ENCODE measurements at regions of chr16 and their contacts with region 1.

Region 1: DNA sequence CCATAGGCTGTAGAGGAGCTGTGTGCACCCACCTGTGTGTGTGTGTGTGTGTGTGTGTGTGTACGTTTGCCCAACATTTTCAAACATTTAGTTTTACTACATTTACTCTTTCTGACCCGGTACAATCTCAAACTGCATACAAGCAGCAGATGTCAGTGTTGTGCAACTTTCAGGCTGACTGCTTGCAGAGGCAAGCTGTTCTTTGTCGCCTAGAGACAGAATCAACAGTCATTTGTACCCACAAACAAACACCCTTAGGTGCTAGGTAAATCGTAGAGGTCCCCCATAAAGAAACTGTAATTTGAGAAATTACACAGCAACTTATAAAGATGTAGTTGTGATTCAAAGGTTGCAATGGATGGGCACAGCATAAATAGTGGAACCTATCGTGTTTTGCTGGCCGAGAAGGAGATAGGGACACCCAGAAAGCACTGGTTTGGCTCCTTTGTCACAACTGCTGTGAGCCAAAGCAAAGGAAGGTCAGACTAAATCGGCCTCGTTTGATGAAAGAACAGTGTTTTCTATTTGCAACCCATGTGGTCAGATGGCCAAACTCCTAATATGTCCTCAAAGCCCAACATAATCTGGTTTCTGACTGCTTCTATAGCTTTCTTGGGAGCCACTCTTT is 478.4 kb downstream of the TOX3 start:
- DNase-seq: peak; percentile 64
- H3K4me3 Mint-ChIP-seq: no peak overlapping the region
- H3K27ac Mint-ChIP-seq: no peak overlapping the region
- H3K4me1 Mint-ChIP-seq: peaks cover 57% of the 10 kb centered on the region
- H3K27me3 Mint-ChIP-seq: no peaks in the 10 kb centered on the region
- CTCF ChIP-seq: no peak

Region 2: GRCh38 chr16:51831595-51832367 is 236.8 kb before region 1 on chr16:
- CTCF ChIA-PET with region 1: no interaction called
- intact Hi-C with region 1: no loop called
- DNase-seq: no peak
- H3K4me3 Mint-ChIP-seq: peak overlapping the region; percentile 19
- H3K27ac Mint-ChIP-seq: peak overlapping the region; percentile 24
- H3K4me1 Mint-ChIP-seq: peaks cover 21% of the 10 kb centered on the region
- H3K27me3 Mint-ChIP-seq: no peaks in the 10 kb centered on the region
- CTCF ChIP-seq: no peak

Region 3: DNA sequence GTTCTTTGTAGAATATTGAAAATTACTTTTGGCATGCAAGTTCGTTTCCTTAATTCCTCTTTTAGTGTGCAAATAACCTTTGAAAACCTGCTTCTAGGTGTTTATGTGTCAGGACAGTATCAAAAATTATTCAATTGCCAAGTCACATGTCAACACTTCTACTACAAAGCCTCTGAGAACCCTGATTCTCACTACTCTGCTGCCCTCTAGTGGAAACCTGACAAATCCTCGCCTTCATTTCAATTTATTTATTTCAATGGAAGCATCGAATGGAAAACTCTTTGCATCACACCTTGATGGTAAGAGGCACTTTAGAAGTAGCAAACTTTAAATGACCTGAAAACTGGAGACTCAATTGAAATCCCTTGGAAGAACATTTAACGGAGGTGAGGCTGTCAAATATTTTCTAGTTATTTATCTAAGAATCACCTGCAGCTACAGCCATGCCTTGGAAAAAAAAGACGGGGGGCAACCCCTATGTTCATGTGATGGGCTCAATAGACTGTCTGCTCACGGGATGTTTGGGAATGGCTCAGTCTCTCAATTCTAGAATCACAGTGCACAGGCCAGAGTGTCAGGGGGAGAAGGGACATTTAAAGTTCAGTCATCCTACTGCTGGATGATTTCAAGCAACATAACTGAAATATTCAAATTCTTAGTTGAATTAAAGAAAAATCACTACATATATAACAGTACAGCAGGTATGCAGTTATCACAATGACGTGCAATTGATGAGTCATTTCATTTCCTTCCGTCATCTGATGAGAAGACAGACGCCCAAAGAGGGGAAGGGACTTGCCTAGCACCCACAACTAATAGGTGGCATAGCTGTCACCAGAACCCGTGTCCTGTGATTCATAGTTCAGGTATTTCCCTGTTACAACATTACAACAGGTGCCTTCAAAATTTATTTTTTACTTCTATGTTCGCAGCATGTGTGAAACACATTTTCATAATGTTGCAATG is 85.6 kb before region 1 on chr16:
- CTCF ChIA-PET with region 1: no interaction called
- intact Hi-C with region 1: no loop called
- DNase-seq: peak; percentile 72
- H3K4me3 Mint-ChIP-seq: peak overlapping the region; percentile 14
- H3K27ac Mint-ChIP-seq: peak overlapping the region; percentile 90
- H3K4me1 Mint-ChIP-seq: peaks cover 36% of the 10 kb centered on the region
- H3K27me3 Mint-ChIP-seq: no peaks in the 10 kb centered on the region
- CTCF ChIP-seq: peak; percentile 78

Region 4: DNA sequence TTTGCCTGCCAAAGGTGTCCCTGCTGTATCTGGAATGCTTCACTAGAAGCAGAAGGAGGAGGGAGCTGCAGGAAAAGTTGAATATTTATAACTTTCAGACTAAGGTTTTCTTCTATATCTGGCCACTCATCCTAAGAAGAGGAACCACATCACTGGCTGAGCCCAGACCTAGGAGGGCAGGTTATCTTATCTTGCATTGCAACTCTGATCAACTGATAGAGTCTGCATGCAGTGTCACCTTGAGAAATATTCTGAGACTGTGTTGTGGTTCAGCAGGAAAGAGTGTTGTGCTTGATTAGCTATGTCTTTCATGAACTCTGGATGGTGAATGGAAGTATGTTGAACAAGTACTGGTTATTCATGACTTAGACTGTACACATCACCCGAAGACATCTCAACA is 18.3 kb after region 1 on chr16:
- CTCF ChIA-PET with region 1: no interaction called
- intact Hi-C with region 1: no loop called
- DNase-seq: no peak
- H3K4me3 Mint-ChIP-seq: no peak overlapping the region
- H3K27ac Mint-ChIP-seq: no peak overlapping the region
- H3K4me1 Mint-ChIP-seq: no peaks in the 10 kb centered on the region
- H3K27me3 Mint-ChIP-seq: no peaks in the 10 kb centered on the region
- CTCF ChIP-seq: no peak

Region 5: GRCh38 chr16:52149003-52149402 is 80.4 kb after region 1 on chr16:
- CTCF ChIA-PET with region 1: no interaction called
- intact Hi-C with region 1: no loop called
- DNase-seq: no peak
- H3K4me3 Mint-ChIP-seq: no peak overlapping the region
- H3K27ac Mint-ChIP-seq: no peak overlapping the region
- H3K4me1 Mint-ChIP-seq: no peaks in the 10 kb centered on the region
- H3K27me3 Mint-ChIP-seq: no peaks in the 10 kb centered on the region
- CTCF ChIP-seq: no peak

Region 6: GRCh38 chr16:52191531-52192134 is 123.1 kb after region 1 on chr16:
- CTCF ChIA-PET with region 1: interaction called, 25 read pairs
- intact Hi-C with region 1: loop called (anchors 2 kb)
- DNase-seq: peak; percentile 80
- H3K4me3 Mint-ChIP-seq: no peak overlapping the region
- H3K27ac Mint-ChIP-seq: no peak overlapping the region
- H3K4me1 Mint-ChIP-seq: peaks cover 11% of the 10 kb centered on the region
- H3K27me3 Mint-ChIP-seq: no peaks in the 10 kb centered on the region
- CTCF ChIP-seq: peak; percentile 89

Region 7: GRCh38 chr16:52408191-52408845 is 339.8 kb after region 1 on chr16:
- CTCF ChIA-PET with region 1: interaction called, 6 read pairs
- intact Hi-C with region 1: loop called (anchors 10 kb)
- DNase-seq: peak; percentile 6
- H3K4me3 Mint-ChIP-seq: no peak overlapping the region
- H3K27ac Mint-ChIP-seq: peak overlapping the region; percentile 70
- H3K4me1 Mint-ChIP-seq: peaks cover 43% of the 10 kb centered on the region
- H3K27me3 Mint-ChIP-seq: no peaks in the 10 kb centered on the region
- CTCF ChIP-seq: no peak

Region 8: GRCh38 chr16:52497067-52497816 is 428.7 kb after region 1 on chr16:
- CTCF ChIA-PET with region 1: interaction called, 4 read pairs
- intact Hi-C with region 1: loop called (anchors 5 kb)
- DNase-seq: no peak
- H3K4me3 Mint-ChIP-seq: peak overlapping the region; percentile 20
- H3K27ac Mint-ChIP-seq: peak overlapping the region; percentile 79
- H3K4me1 Mint-ChIP-seq: peaks cover 92% of the 10 kb centered on the region
- H3K27me3 Mint-ChIP-seq: no peaks in the 10 kb centered on the region
- CTCF ChIP-seq: no peak

Region 9: GRCh38 chr16:52861614-52862022 is 793.1 kb after region 1 on chr16:
- CTCF ChIA-PET with region 1: interaction called, 4 read pairs
- intact Hi-C with region 1: loop called (anchors 1 kb)
- DNase-seq: peak; percentile 61
- H3K4me3 Mint-ChIP-seq: no peak overlapping the region
- H3K27ac Mint-ChIP-seq: no peak overlapping the region
- H3K4me1 Mint-ChIP-seq: peaks cover 36% of the 10 kb centered on the region
- H3K27me3 Mint-ChIP-seq: no peaks in the 10 kb centered on the region
- CTCF ChIP-seq: peak; percentile 48

Region 10: GRCh38 chr16:53022374-53022773 is 953.8 kb after region 1 on chr16:
- CTCF ChIA-PET with region 1: interaction called, 20 read pairs
- intact Hi-C with region 1: loop called (anchors 1 kb)
- DNase-seq: peak; percentile 71
- H3K4me3 Mint-ChIP-seq: no peak overlapping the region
- H3K27ac Mint-ChIP-seq: no peak overlapping the region
- H3K4me1 Mint-ChIP-seq: no peaks in the 10 kb centered on the region
- H3K27me3 Mint-ChIP-seq: no peaks in the 10 kb centered on the region
- CTCF ChIP-seq: peak; percentile 78

Measured in Calu3 (cell line).